OCI-LY7 (cell line): ENCODE measurements at regions of chrX and their contacts with region 1.

Region 1: DNA sequence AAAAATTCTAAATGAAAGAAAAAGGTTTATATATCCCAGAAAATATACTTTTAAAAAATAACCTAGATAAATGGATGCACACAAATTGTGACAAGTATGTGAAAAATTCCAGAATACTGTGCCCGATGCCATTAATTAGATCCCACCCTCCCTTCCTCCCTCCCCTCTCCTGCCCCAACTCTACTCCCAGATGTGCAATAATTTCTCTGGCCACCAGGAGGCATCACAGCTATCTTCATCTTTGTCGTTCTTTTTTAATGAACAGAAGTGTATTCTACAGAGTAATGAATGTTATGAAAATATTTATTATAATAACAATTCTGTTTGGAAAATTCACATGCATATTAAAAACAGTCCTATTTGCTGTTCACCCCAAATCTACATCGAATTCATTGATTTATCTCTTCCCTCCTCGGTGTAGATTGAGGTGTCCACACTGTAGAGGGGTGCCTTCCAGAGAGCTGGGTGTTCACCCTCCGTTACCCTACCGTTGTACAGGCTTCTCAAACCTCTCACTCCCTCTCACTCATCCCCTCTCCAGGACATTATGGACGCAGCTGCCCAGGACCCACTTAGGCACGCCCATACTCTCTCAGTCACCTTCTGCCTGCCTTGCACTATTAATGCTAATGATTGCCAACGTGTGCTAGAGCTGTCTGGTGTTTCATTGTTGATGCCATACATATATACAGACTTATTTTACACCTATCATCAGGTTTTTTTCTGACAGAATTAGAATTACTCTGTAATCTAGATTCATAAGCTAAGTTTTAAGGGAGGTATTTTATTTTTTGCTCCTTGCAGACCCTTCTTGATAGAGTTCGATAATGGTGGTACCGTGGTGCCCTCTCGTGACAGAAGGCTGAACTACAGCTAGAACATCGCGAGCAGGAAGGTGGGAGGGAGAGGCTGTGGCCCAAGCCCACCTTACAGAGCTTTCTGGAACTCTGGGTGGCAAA is 14.1 kb downstream of the RAB40AL start:
- DNase-seq: peak; percentile 16
- H3K4me3 ChIP-seq: no peak overlapping the region
- H3K27ac ChIP-seq: no peak overlapping the region
- H3K4me1 ChIP-seq: no peaks in the 10 kb centered on the region
- CTCF ChIP-seq: peak; percentile 63

Region 2: DNA sequence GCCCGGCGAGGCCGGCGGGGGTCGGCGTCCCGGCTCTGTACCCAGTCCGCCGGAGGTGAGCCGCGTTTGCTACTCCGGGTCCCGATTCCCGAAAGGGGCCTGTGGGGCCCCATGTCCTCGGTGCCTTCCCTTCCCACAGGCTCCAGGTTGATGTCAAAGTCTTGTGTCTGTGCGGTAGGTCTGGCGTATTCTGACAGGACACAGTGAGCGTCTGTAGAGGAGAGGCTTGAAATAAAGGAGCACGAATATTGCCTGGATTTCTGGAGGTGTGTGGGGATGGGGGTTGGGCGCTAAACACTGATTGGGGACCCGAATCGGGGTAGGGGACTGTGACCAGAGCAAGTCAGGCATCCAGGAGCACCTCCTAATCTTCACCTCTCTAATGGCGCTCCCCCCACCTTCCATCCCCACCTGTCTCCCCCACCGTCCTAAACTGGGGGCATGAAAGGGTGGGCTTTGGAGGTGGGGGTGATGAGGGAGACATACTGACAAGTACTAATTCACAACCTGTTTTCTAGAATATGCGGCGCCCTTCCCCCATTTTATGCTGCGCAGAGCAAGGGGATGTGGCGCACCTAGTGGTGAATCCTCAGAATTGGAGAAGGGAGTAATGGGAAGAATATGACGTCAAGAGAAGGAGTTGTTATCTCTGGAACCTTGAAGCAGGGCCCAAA is 238.1 kb before region 1 on chrX:
- CTCF ChIA-PET with region 1: no interaction called
- POLR2A ChIA-PET with region 1: no interaction called
- intact Hi-C with region 1: no loop called
- DNase-seq: no peak
- H3K4me3 ChIP-seq: no peak overlapping the region
- H3K27ac ChIP-seq: no peak overlapping the region
- H3K4me1 ChIP-seq: no peaks in the 10 kb centered on the region
- CTCF ChIP-seq: no peak

Region 3: GRCh38 chrX:103051260-103051789 is 100.1 kb after region 1 on chrX:
- CTCF ChIA-PET with region 1: no interaction called
- POLR2A ChIA-PET with region 1: no interaction called
- intact Hi-C with region 1: no loop called
- DNase-seq: no peak
- H3K4me3 ChIP-seq: no peak overlapping the region
- H3K27ac ChIP-seq: no peak overlapping the region
- H3K4me1 ChIP-seq: no peaks in the 10 kb centered on the region
- CTCF ChIP-seq: no peak

Region 4: GRCh38 chrX:103157496-103158320 is 206.5 kb after region 1 on chrX:
- CTCF ChIA-PET with region 1: no interaction called
- POLR2A ChIA-PET with region 1: interaction called, 4 read pairs
- intact Hi-C with region 1: loop called (anchors 10 kb)
- DNase-seq: peak; percentile 15
- H3K4me3 ChIP-seq: no peak overlapping the region
- H3K27ac ChIP-seq: no peak overlapping the region
- H3K4me1 ChIP-seq: no peaks in the 10 kb centered on the region
- CTCF ChIP-seq: peak; percentile 75

Region 5: GRCh38 chrX:103878466-103879122 is 927.4 kb after region 1 on chrX:
- CTCF ChIA-PET with region 1: no interaction called
- POLR2A ChIA-PET with region 1: no interaction called
- intact Hi-C with region 1: no loop called
- DNase-seq: no peak
- H3K4me3 ChIP-seq: no peak overlapping the region
- H3K27ac ChIP-seq: no peak overlapping the region
- H3K4me1 ChIP-seq: no peaks in the 10 kb centered on the region
- CTCF ChIP-seq: no peak